Left cardiac atrium (tissue), 4 donors: ENCODE measurements at regions of chr4 and their contacts with region 1.

Region 1: DNA sequence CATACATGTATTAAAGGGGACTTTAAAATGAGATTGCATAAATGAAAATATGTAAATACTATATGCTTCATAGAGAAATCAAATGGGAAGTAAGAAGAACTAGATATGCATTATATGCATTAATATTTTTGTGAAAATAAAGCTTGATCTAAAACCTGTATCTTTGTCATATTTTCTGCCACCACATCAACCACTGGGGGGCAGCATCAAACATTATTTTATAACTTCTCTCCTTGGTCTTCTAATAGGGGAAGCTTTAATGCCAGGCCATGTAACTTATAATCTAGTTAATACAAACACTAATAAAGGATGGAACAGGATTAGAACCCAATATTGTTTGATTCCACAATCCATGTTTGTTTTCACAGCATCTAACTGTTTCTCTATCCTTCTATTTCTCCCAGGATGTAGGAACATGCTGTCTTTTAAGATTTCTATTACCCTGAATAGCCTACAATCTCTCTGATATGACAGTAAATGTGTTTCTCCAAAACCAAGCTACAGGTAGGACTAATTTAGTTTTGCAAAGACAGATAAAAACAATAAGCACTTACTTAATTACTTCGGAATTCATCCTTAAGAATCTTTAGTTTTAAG is 10.0 kb downstream of the QRFPR start:
- DNase-seq: peak; percentile 44
- ATAC-seq: peak in 1 of 2 donors; percentile 53

Region 2: GRCh38 chr4:121050300-121050699 is 320.5 kb before region 1 on chr4:
- intact Hi-C with region 1: no loop called
- DNase-seq: no peak
- ATAC-seq: peak in 1 of 2 donors; percentile 48

Region 3: GRCh38 chr4:121421594-121421993 is 50.8 kb after region 1 on chr4:
- intact Hi-C with region 1: loop called (anchors 2 to 5 kb)
- DNase-seq: no peak
- ATAC-seq: no peak

Region 4: DNA sequence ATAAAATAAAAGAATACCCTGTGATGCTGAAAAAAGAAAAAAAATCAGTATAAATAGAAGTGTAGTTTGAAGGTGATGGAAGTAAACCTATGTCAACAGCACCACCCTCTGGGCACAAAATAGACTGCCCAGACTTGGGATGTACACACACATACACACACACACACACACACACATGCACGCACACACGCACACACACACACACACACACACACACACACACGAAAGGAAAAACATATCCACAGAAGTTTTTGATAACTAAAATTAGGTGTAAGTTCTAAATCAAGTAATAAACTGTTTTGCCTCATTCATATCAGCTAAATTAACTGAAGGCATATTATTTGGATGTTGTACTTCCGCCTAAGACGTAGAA is 285.4 kb after region 1 on chr4:
- intact Hi-C with region 1: loop called (anchors 5 to 10 kb)
- DNase-seq: peak; percentile 58
- ATAC-seq: peak; percentile 76 to 87

Region 5: DNA sequence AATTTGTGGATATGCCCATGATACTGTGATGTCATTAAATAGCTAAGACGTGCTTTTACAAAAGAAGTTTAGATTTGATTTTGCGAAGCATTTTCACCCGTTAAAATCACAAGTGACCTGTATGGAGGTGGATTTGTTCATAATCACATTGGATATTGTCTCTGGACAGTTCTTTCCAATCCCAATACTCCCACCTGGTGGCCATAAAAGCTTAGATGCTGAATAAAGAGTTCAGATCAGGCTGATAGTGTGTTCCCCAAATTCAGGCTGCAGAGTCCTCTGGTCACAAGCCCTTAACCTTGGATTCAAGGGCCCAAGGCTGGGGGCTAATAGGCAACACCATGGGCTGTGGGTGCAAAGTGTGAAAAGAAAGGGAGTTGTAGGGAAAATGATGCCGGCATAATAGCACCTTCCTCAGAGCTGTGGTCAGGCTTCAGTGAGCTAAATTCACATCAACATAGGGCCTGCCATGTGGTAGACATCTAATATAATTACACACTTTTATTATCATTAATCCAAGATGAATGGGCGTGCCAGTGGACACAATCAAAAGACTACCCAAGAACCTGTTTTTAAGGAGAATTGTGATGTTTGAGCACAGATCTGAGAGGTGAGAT is 366.0 kb after region 1 on chr4:
- intact Hi-C with region 1: loop called in 1 of 2 experiments (anchors 5 kb)
- DNase-seq: no peak
- ATAC-seq: peak; percentile 41 to 51